MCF 10A (cell line): ENCODE measurements at regions of chr12 and their contacts with region 1.

Region 1: DNA sequence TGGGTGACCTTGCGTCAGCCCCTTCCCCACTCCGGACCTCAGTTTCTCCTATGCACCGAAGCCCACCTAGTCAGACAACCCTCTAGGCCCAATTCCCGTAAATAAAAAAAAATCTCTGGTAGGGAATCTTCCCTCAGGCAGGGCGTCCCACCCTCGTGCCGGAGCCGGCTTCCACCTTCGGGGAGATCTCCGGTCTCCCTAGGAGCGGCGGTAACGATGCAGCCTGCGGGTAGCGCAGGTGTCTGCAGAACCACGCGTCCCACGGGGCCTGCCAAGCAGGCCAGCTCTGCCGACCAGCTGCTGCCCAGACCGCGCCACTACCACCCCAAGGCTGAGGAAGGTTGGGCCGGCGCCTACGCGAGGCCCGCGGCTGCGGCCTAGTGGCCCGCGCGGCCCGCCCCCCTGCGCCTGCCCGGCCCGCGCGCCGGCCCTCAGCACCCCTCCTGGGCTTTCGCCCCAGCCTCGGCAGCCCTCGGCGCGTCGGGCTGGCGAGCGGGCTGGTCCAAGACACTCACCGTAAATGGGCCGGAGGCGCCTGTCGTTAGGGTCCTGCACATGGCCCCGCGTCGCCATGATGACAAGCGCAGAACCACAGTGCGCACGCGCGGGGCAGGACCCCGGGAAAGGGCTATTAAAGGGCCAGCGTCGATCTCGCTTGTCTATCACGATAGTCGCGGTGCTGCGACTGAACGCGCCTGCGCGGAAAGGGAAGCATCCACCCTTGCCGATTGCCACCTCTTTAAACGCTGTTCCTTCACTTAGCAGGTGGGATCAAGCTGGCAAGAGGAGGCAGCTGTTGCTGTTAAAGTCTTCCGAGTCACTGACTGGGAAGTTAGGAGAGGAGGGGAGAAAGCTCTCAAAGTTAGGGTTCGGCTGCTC is at the start of gene NAA25:
- DNase-seq: peak; percentile 88
- H3K4me3 Mint-ChIP-seq: peak within 1 kb of the TSS; percentile 93
- H3K27ac Mint-ChIP-seq: peak within 1 kb of the TSS; percentile 90
- H3K4me1 Mint-ChIP-seq: peaks cover 25% of the 10 kb centered on the region
- H3K27me3 Mint-ChIP-seq: no peaks in the 10 kb centered on the region
- CTCF ChIP-seq: no peak
- total RNA-seq, gene NAA25: 37.1 and 39.2 TPM in 2 replicates

Region 2: DNA sequence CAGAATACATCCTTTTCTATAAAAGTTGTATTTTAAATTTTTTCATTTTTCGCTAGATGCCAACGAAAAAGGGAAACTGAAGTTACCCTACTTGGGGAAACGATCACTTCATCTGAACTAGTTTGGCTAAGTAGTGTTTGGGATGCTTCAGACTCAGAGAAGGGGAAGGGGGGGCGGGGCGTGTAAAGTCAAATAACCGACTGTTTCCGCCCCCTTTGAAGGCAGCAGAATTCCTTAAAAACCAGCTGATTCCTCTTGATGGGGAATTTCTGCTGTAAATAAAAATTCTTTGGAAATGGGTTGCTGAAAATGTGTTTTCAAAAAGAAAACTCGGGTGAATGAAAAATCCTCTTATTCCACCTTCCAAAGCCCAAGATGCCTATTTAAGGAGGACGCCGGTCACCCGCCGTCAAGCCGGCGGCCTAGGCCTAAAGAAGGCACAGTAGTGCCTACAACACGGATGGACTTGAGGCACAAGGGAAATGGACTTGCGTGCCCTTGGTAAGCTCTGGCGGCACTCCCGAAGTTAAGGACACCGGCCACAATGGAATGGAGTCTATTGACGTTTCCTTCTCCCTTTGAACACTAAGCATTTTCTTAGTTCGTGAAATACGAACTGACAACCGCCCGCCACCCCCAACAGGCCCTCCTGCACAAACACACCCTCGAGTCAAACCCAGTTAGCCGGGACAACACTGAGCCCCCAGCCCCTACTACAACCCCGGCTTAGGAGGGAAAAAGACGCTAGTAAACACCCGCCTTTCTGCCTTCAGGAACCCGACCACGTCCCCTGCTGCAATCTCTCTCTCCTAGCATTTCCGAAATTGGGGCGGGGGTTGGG is 511.2 kb before region 1 on chr12:
- CTCF ChIA-PET with region 1: no interaction called
- POLR2A ChIA-PET with region 1: no interaction called
- intact Hi-C with region 1: no loop called
- DNase-seq: peak; percentile 73
- H3K4me3 Mint-ChIP-seq: peak overlapping the region; percentile 84
- H3K27ac Mint-ChIP-seq: peak overlapping the region; percentile 73
- H3K4me1 Mint-ChIP-seq: peaks cover 20% of the 10 kb centered on the region
- H3K27me3 Mint-ChIP-seq: no peaks in the 10 kb centered on the region
- CTCF ChIP-seq: no peak

Region 3: GRCh38 chr12:112096667-112097066 is 11.8 kb before region 1 on chr12:
- CTCF ChIA-PET with region 1: interaction called, 3 read pairs
- POLR2A ChIA-PET with region 1: interaction called, 33 read pairs
- intact Hi-C with region 1: no loop called
- DNase-seq: peak; percentile 66
- H3K4me3 Mint-ChIP-seq: no peak overlapping the region
- H3K27ac Mint-ChIP-seq: peak overlapping the region; percentile 65
- H3K4me1 Mint-ChIP-seq: peaks cover 26% of the 10 kb centered on the region
- H3K27me3 Mint-ChIP-seq: no peaks in the 10 kb centered on the region
- CTCF ChIP-seq: no peak

Region 4: GRCh38 chr12:112125250-112125999 is 17.0 kb after region 1 on chr12 and contains the start of gene TRAFD1:
- CTCF ChIA-PET with region 1: interaction called, 95 read pairs
- POLR2A ChIA-PET with region 1: interaction called, 530 read pairs
- intact Hi-C with region 1: no loop called
- DNase-seq: peak; percentile 97
- H3K4me3 Mint-ChIP-seq: peak within 1 kb of the TSS; percentile 79
- H3K27ac Mint-ChIP-seq: peak within 1 kb of the TSS; percentile 61
- H3K4me1 Mint-ChIP-seq: peaks cover 19% of the 10 kb centered on the region
- H3K27me3 Mint-ChIP-seq: no peaks in the 10 kb centered on the region
- CTCF ChIP-seq: no peak
- total RNA-seq, gene TRAFD1: 23.4 and 29.7 TPM in 2 replicates

Region 5: GRCh38 chr12:112309828-112310227 is 201.4 kb after region 1 on chr12:
- CTCF ChIA-PET with region 1: no interaction called
- POLR2A ChIA-PET with region 1: no interaction called
- intact Hi-C with region 1: no loop called
- DNase-seq: no peak
- H3K4me3 Mint-ChIP-seq: no peak overlapping the region
- H3K27ac Mint-ChIP-seq: no peak overlapping the region
- H3K4me1 Mint-ChIP-seq: no peaks in the 10 kb centered on the region
- H3K27me3 Mint-ChIP-seq: no peaks in the 10 kb centered on the region
- CTCF ChIP-seq: no peak